ENCODE measurements at regions of chr3 and their contacts with region 1.

Region 1: DNA sequence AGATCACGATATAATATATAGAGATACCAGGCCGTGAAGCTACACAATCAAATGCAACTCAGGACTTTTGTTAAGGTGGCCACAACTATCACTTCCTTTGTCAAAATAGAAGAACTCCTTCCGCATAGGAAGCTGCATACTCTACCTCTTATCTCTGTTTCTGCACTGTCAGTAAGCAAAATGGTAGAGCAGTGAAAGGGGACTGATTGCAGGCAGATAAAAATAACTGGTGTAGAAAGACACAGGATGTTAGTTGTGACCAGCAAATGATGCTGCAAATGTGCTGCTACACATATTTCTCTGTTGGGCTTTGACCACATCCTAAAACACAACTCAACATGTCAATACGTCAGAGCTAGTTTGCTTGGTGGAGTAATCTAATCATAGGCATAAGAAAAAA is 16.3 kb upstream of the TRAT1 start:
- DNase-seq: peak in 5 of 9 experiments; percentile 24 to 88 (median 49)
- ATAC-seq: peak; percentile 92
- H3K4me3 ChIP-seq: no peak overlapping the region
- H3K4me3 Mint-ChIP-seq: peak overlapping the region; percentile 40
- H3K27ac ChIP-seq: peak overlapping the region; percentile 25 to 70
- H3K27ac Mint-ChIP-seq: peak overlapping the region; percentile 71
- H3K4me1 ChIP-seq: peaks cover 19% of the 10 kb centered on the region
- H3K4me1 Mint-ChIP-seq: peaks cover 26% of the 10 kb centered on the region
- H3K27me3 ChIP-seq: no peaks in the 10 kb centered on the region
- H3K27me3 Mint-ChIP-seq: no peaks in the 10 kb centered on the region
- CTCF ChIP-seq: no peak

Region 2: DNA sequence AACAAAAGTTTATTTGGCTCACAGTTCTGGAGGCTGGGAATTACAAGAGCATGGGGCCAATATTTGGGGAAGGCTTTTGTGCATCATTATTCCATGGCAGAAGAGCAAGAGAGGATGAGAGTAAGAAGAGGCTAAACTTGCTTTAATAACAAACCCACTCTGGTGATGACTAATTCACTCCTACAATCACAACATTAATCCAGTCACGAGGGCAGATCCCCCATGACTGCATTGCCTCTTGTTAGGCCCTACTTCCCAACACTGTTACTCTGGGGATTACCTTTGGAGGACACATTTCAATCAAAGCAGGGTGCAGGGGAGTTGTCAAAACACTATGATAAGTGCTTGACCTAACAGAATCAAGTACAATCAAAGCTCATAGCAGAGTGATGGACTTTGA is 1101.8 kb before region 1 on chr3:
- CTCF ChIA-PET with region 1: no interaction called
- POLR2A ChIA-PET with region 1: no interaction called
- intact Hi-C with region 1: no loop called
- DNase-seq: no peak
- ATAC-seq: no peak
- H3K4me3 ChIP-seq: no peak overlapping the region
- H3K4me3 Mint-ChIP-seq: no peak overlapping the region
- H3K27ac ChIP-seq: no peak overlapping the region
- H3K27ac Mint-ChIP-seq: peak overlapping the region; percentile 34
- H3K4me1 ChIP-seq: no peaks in the 10 kb centered on the region
- H3K4me1 Mint-ChIP-seq: peaks cover 31% of the 10 kb centered on the region
- H3K27me3 ChIP-seq: no peaks in the 10 kb centered on the region
- H3K27me3 Mint-ChIP-seq: no peaks in the 10 kb centered on the region
- CTCF ChIP-seq: no peak

Region 3: DNA sequence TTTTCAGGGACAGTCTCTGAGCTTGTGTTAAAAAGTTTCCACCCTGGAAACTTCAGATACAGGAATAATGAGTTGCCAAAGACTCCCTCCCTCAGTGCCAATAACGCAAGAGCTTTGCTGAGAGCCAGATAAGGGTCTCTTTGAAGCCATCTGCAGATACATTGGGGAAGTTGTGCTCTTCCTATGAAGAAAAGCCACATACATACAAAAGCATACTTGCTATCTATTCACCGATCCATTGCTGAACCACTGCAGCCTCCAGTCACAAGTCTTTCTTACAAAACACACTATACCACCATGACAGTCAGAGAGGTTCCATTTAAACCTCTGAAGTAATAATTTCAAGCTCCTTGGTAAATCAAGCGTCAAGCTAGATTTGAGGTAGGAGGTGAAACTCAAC is 39.1 kb before region 1 on chr3:
- CTCF ChIA-PET with region 1: no interaction called
- POLR2A ChIA-PET with region 1: no interaction called
- intact Hi-C with region 1: loop called in 1 of 2 experiments (anchors 5 kb)
- DNase-seq: no peak
- ATAC-seq: no peak
- H3K4me3 ChIP-seq: no peak overlapping the region
- H3K4me3 Mint-ChIP-seq: no peak overlapping the region
- H3K27ac ChIP-seq: no peak overlapping the region
- H3K27ac Mint-ChIP-seq: no peak overlapping the region
- H3K4me1 ChIP-seq: no peaks in the 10 kb centered on the region
- H3K4me1 Mint-ChIP-seq: no peaks in the 10 kb centered on the region
- H3K27me3 ChIP-seq: no peaks in the 10 kb centered on the region
- H3K27me3 Mint-ChIP-seq: no peaks in the 10 kb centered on the region
- CTCF ChIP-seq: no peak

Measured in CD8-positive, alpha-beta T cell (primary cell).